PC-9 (cell line): ENCODE measurements at regions of chr9 and their contacts with region 1.

Region 1: DNA sequence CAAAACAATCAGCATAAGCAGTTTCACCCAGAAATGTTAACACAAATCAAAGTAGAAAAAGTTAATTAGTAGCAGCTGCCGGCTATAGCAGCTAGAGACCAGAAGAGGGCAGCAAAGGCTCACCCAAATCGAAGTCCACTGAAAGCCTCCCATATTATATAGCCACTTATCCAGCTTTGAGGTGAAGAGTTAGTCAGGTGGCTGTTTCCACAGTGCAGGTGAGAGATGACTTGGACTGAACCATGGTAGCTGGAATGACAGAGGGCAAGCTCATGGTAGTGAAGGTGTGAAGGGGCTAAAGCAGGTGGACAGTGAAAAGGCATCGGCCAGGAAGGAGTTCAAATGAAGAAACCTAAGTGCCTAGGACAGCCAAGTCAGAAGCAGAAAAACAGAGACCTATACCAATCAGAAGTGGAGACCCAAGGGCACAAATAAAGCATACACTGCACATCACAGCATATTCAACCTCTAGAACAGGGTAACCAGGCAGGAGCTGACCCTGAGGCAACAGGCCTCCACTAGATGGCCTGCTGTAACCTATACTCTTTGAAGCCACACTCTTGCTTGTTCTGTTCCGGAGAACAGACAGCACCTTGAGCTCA is 7.2 kb upstream of the RNF38 start:
- DNase-seq: peak; percentile 37 to 47
- H3K4me3 ChIP-seq: no peak overlapping the region
- H3K27ac ChIP-seq: no peak overlapping the region
- H3K4me1 ChIP-seq: no peaks in the 10 kb centered on the region
- H3K27me3 ChIP-seq: no peaks in the 10 kb centered on the region
- CTCF ChIP-seq: peak; percentile 88

Region 2: GRCh38 chr9:36426945-36427344 is 19.7 kb after region 1 on chr9:
- CTCF ChIA-PET with region 1: no interaction called
- POLR2A ChIA-PET with region 1: no interaction called
- intact Hi-C with region 1: no loop called
- DNase-seq: no peak
- H3K4me3 ChIP-seq: no peak overlapping the region
- H3K27ac ChIP-seq: no peak overlapping the region
- H3K4me1 ChIP-seq: peaks cover 13% of the 10 kb centered on the region
- H3K27me3 ChIP-seq: no peaks in the 10 kb centered on the region
- CTCF ChIP-seq: no peak

Region 3: GRCh38 chr9:36551129-36551528 is 143.9 kb after region 1 on chr9:
- CTCF ChIA-PET with region 1: interaction called, 4 read pairs
- POLR2A ChIA-PET with region 1: no interaction called
- intact Hi-C with region 1: loop called (anchors 1 kb)
- DNase-seq: peak in 1 of 2 experiments; percentile 35
- H3K4me3 ChIP-seq: no peak overlapping the region
- H3K27ac ChIP-seq: no peak overlapping the region
- H3K4me1 ChIP-seq: no peaks in the 10 kb centered on the region
- H3K27me3 ChIP-seq: no peaks in the 10 kb centered on the region
- CTCF ChIP-seq: no peak